ENCODE measurements at regions of chr21 and their contacts with region 1.

Region 1: GRCh38 chr21:39715804-39716397 is 29.1 kb upstream of the IGSF5 start:
- DNase-seq: peak; percentile 65 to 80
- H3K4me3 ChIP-seq: no peak overlapping the region
- H3K27ac ChIP-seq: no peak overlapping the region
- H3K4me1 ChIP-seq: no peaks in the 10 kb centered on the region
- H3K27me3 ChIP-seq: peaks cover 0 to 13% (median 0%) of the 10 kb centered on the region in 3 donors
- CTCF ChIP-seq: peak in 5 of 7 experiments; percentile 38 to 70 (median 63)
- EP300 ChIP-seq: no peak
- POLR2A ChIP-seq: no peak

Region 2: GRCh38 chr21:39518138-39518846 is 197.6 kb before region 1 on chr21:
- intact Hi-C with region 1: loop called (anchors 5 kb)
- DNase-seq: peak; percentile 44 to 83
- H3K4me3 ChIP-seq: no peak overlapping the region
- H3K27ac ChIP-seq: no peak overlapping the region
- H3K4me1 ChIP-seq: peaks cover 0 to 23% (median 7%) of the 10 kb centered on the region in 4 donors
- H3K27me3 ChIP-seq: no peaks in the 10 kb centered on the region
- CTCF ChIP-seq: peak in 5 of 7 experiments; percentile 81 to 91 (median 90)
- EP300 ChIP-seq: no peak
- POLR2A ChIP-seq: no peak

Region 3: DNA sequence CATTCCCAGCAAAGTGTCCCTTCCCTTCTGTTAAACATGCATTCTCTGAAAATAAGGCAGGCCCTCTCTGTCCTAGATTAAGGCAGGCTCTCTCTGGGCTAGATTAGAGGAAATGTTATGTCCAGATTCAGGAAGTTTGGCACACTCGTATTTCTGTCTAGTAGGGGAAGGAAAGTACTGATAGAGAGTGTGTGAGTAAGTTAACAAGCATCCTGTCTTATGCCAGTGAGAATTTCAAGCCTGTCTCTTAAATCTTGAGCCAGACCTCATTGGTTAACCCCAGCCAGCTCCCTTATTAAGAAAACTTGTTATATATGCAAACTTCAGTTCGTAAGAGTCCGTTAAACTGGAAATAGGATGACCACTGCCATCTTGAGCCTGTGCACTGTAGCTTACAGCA is 60.7 kb after region 1 on chr21:
- intact Hi-C with region 1: no loop called
- DNase-seq: no peak
- H3K4me3 ChIP-seq: no peak overlapping the region
- H3K27ac ChIP-seq: no peak overlapping the region
- H3K4me1 ChIP-seq: no peaks in the 10 kb centered on the region
- H3K27me3 ChIP-seq: no peaks in the 10 kb centered on the region
- CTCF ChIP-seq: no peak
- EP300 ChIP-seq: no peak
- POLR2A ChIP-seq: no peak

Measured in stomach (tissue), 19 donors.